ENCODE measurements at regions of chr21 and their contacts with region 1.

Region 1: GRCh38 chr21:38505654-38506515 is 7.6 kb upstream of the ERG start:
- DNase-seq: peak in 2 of 9 experiments; percentile 23 to 46
- ATAC-seq: no peak
- H3K4me3 ChIP-seq: no peak overlapping the region
- H3K4me3 Mint-ChIP-seq: no peak overlapping the region
- H3K27ac ChIP-seq: no peak overlapping the region
- H3K27ac Mint-ChIP-seq: no peak overlapping the region
- H3K4me1 ChIP-seq: no peaks in the 10 kb centered on the region
- H3K4me1 Mint-ChIP-seq: peaks cover 3% of the 10 kb centered on the region
- H3K27me3 ChIP-seq: no peaks in the 10 kb centered on the region
- H3K27me3 Mint-ChIP-seq: peaks cover 23% of the 10 kb centered on the region
- CTCF ChIP-seq: peak; percentile 30

Region 2: DNA sequence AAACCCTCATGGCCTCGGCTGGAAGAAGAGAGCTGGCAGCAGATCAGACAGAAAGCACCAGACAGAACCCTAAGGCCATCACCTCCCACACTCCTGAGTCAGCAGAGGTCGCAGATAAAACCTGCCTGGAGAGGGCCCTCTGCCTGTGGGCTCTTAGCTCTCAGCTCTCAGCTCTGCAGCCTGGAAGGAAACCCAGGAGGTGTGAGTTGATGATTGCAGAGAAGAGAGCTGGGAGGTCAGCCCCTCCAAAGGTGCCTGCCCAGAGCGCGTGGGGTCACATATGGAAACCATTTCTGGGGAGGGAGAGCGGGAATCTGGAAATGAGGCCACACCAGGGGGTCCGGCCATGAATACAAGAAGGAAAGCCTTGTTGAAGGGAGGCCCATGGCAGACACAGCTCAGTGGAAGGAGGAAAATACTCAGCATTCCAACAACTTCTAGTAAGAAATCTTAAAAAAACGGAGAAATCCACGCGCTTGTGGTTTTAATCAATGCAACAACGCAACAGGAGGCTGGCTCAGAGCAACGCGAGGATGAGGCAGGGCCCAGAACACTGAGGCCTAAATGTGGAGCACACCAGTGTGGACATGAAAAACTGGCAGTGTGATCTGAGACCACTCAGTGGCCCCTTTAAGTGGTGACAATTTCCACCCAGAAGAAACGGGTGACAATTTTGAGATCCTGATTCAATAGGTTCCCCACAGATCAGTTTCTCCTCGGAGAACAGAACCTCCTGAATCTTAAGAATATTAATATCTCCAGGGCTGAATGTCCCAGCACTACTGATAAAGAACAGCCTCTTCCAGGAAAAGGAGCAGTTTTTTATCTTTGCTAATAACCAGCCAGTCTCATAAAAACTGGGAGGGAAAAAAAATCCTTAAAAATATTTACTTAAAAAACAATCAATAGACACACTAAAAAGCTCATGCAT is 631.6 kb after region 1 on chr21:
- CTCF ChIA-PET with region 1: no interaction called
- POLR2A ChIA-PET with region 1: no interaction called
- intact Hi-C with region 1: loop called (anchors 2 to 5 kb)
- DNase-seq: no peak
- ATAC-seq: no peak
- H3K4me3 ChIP-seq: no peak overlapping the region
- H3K4me3 Mint-ChIP-seq: no peak overlapping the region
- H3K27ac ChIP-seq: no peak overlapping the region
- H3K27ac Mint-ChIP-seq: no peak overlapping the region
- H3K4me1 ChIP-seq: no peaks in the 10 kb centered on the region
- H3K4me1 Mint-ChIP-seq: no peaks in the 10 kb centered on the region
- H3K27me3 ChIP-seq: no peaks in the 10 kb centered on the region
- H3K27me3 Mint-ChIP-seq: peaks cover 3% of the 10 kb centered on the region
- CTCF ChIP-seq: no peak

Region 3: GRCh38 chr21:39175154-39175553 is 669.3 kb after region 1 on chr21:
- CTCF ChIA-PET with region 1: no interaction called
- POLR2A ChIA-PET with region 1: no interaction called
- intact Hi-C with region 1: loop called in 1 of 2 experiments (anchors 10 kb)
- DNase-seq: peak in 2 of 9 experiments; percentile 25 to 34
- ATAC-seq: no peak
- H3K4me3 ChIP-seq: no peak overlapping the region
- H3K4me3 Mint-ChIP-seq: no peak overlapping the region
- H3K27ac ChIP-seq: no peak overlapping the region
- H3K27ac Mint-ChIP-seq: no peak overlapping the region
- H3K4me1 ChIP-seq: peaks cover 2% of the 10 kb centered on the region
- H3K4me1 Mint-ChIP-seq: peaks cover 2% of the 10 kb centered on the region
- H3K27me3 ChIP-seq: no peaks in the 10 kb centered on the region
- H3K27me3 Mint-ChIP-seq: no peaks in the 10 kb centered on the region
- CTCF ChIP-seq: peak; percentile 66

Measured in CD8-positive, alpha-beta T cell (primary cell).